Prostate gland (tissue), 2 donors: ENCODE measurements at regions of chr7 and their contacts with region 1.

Region 1: DNA sequence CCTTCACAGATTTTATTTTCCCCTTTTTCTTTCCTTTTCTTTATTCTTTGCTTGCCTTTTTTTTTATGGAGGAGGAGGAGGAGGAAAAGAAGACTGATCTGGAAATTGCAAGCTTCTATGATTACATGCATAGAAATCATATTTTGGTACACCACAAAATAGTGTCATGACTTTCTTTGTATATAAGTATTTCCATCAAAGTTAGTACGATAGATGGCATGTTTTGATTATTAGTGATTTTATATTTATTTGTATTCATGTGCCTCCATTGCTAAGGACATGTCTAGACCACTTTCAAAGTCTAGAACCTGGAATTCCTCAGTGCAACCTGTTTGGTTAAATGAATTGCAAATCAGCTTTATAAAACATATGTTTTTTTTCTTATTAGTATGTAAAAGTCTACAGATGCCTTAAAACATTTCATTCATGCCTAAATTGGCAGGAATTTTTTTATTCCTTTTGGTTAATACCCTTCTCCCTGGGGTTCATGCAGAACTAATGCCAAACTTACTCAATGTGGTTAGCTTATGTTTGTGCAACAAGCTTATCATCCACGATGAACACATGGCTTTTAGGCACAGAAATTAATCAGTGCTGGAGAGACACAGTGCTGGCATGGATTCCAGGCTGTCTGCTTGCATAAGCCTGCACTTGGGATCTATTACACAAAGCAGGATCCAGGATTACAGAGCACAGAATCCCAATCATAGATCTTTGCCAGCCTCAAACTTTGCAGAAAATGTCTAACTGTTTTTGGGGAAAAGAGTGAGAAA is 213.1 kb downstream of the CHRM2 start:
- DNase-seq: no peak
- H3K4me3 ChIP-seq: no peak overlapping the region
- H3K27ac ChIP-seq: no peak overlapping the region
- H3K4me1 ChIP-seq: no peaks in the 10 kb centered on the region
- H3K27me3 ChIP-seq: no peaks in the 10 kb centered on the region
- CTCF ChIP-seq: no peak
- POLR2A ChIP-seq: no peak

Region 2: GRCh38 chr7:137040745-137041144 is 40.8 kb before region 1 on chr7:
- intact Hi-C with region 1: no loop called
- DNase-seq: no peak
- H3K4me3 ChIP-seq: no peak overlapping the region
- H3K27ac ChIP-seq: no peak overlapping the region
- H3K4me1 ChIP-seq: no peaks in the 10 kb centered on the region
- H3K27me3 ChIP-seq: no peaks in the 10 kb centered on the region
- CTCF ChIP-seq: no peak
- POLR2A ChIP-seq: no peak

Region 3: GRCh38 chr7:137454246-137454724 is 372.8 kb after region 1 on chr7:
- intact Hi-C with region 1: loop called (anchors 10 kb)
- DNase-seq: no peak
- H3K4me3 ChIP-seq: no peak overlapping the region
- H3K27ac ChIP-seq: no peak overlapping the region
- H3K4me1 ChIP-seq: no peaks in the 10 kb centered on the region
- H3K27me3 ChIP-seq: no peaks in the 10 kb centered on the region
- CTCF ChIP-seq: peak; percentile 35 to 64 (median 50)
- POLR2A ChIP-seq: no peak